Activated CD8-positive, alpha-beta T cell treated with anti-CD3 and anti-CD28 coated beads for 36 hours (primary cell): ENCODE measurements at regions of chr6 and their contacts with region 1.

Region 1: DNA sequence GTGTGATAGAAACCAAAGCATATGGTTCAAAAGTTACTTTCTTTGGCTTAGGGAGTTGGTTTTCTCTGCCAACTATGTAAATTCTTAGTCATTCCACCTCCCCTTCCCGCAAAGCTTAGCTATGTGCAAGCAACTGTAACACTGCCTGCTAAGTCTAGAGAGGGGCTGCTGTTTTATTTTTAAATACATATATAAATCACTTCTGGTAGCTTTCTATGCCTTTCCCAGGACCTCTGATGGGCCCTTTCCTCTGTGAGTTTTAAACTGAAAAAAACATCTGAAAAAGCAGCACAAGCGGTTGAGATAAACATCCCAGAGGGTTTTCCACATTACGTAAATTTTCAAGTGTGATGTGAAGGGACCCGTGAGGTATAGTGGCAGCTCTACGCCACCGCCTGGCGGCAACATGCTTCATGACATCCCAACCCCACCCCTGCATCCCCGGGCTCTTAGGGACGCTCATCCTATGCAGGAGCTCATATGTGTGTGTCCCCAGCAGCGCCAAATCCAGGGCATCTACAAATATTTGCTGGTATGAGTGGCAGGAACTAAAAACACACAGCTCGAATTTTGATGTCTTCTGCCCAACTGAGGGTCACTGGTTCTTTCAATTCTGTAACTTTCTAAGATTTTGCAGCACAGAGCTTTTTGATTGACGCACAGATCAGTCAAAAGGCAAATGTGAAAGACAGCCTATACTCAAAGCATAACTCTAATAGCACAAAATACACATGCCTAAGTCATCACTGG is 12.7 kb downstream of the SAYSD1 start:
- DNase-seq: peak; percentile 44
- ATAC-seq: peak; percentile 37
- H3K4me3 Mint-ChIP-seq: no peak overlapping the region
- H3K27ac Mint-ChIP-seq: no peak overlapping the region
- H3K4me1 Mint-ChIP-seq: peaks cover 36% of the 10 kb centered on the region
- H3K27me3 Mint-ChIP-seq: no peaks in the 10 kb centered on the region
- CTCF ChIP-seq: peak; percentile 36

Region 2: GRCh38 chr6:39035681-39036080 is 66.6 kb before region 1 on chr6:
- CTCF ChIA-PET with region 1: no interaction called
- POLR2A ChIA-PET with region 1: no interaction called
- intact Hi-C with region 1: no loop called
- DNase-seq: no peak
- ATAC-seq: no peak
- H3K4me3 Mint-ChIP-seq: no peak overlapping the region
- H3K27ac Mint-ChIP-seq: no peak overlapping the region
- H3K4me1 Mint-ChIP-seq: peaks cover 5% of the 10 kb centered on the region
- H3K27me3 Mint-ChIP-seq: peaks cover 58% of the 10 kb centered on the region
- CTCF ChIP-seq: no peak

Region 3: DNA sequence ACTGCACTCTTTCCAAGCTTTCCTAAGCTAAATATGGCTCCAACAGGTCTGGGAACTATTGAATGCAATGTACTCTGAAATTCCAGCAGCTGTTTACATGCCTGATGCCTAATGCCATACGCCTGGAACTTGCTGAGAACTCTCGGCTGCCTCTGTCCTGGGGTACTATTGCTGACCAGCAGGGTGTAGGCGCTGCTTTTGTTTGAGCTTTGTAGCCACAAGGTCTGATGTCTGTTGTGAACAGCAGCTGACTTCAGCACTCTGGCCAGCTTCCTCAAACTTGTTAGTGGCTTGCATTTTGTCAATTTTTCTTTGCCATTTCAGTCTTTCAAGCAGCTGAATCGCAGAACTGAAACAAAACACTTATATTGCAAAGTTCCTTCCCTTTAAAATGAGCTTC is 13.9 kb before region 1 on chr6:
- CTCF ChIA-PET with region 1: interaction called, 10 read pairs
- POLR2A ChIA-PET with region 1: interaction called, 4 read pairs
- intact Hi-C with region 1: no loop called
- DNase-seq: peak; percentile 61
- ATAC-seq: peak; percentile 38
- H3K4me3 Mint-ChIP-seq: no peak overlapping the region
- H3K27ac Mint-ChIP-seq: no peak overlapping the region
- H3K4me1 Mint-ChIP-seq: peaks cover 21% of the 10 kb centered on the region
- H3K27me3 Mint-ChIP-seq: peaks cover 49% of the 10 kb centered on the region
- CTCF ChIP-seq: no peak